ENCODE measurements at regions of chr1 and their contacts with region 1.

Region 1: DNA sequence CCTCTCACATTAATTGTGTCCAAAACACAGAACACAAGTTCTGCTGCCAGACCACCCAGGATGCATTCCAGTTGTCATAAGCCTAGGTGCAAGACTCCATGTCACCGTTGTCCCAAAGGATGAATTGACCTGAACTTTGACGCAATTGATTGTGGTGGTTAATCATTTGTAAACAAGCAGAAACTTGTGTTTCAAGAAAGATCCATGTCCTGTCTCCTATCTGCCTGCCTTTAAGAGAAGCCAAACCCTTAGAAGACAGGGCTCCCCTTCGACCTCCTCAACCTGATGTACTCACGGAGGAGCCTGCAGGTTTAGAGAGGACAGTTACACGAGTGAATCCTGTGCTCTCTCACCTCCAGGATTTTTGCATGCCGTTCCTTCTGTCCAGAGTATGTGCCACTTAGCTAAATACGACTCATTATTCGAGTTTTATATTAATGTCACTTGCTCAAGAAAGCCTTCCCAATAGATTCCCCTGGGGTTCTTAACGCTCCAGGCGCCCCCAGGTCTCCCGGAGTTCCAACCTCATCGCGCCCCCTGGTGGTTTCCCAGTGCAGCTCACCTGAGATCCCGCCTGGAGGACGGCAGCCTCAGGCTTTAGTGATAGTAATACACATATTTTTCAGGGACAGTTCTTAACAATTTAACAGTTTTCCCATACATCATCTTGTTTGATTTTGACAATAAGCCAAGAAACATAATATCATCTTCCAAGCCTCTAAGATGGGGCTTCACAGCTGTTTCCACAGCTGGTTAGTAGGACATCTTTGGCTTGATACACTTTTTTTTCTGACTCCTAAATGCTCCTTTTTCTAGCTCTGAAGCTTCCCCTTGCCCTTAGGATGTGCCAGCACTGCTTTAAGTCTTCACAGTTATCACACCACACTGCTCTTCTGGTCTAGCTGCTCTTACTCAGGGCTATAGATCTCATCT is 2.4 kb upstream of the C8B start:
- DNase-seq: peak; percentile 21 to 93
- H3K4me3 ChIP-seq: no peak overlapping the region
- H3K27ac ChIP-seq: no peak overlapping the region
- H3K4me1 ChIP-seq: no peaks in the 10 kb centered on the region
- H3K27me3 ChIP-seq: no peaks in the 10 kb centered on the region
- CTCF ChIP-seq: peak; percentile 74 to 87 (median 83)
- EP300 ChIP-seq: no peak
- POLR2A ChIP-seq: no peak
- RAD21 ChIP-seq: peak; percentile 75 to 85

Region 2: GRCh38 chr1:56814205-56814604 is 154.0 kb before region 1 on chr1:
- CTCF ChIA-PET with region 1: no interaction called
- POLR2A ChIA-PET with region 1: no interaction called
- DNase-seq: no peak
- H3K4me3 ChIP-seq: no peak overlapping the region
- H3K27ac ChIP-seq: no peak overlapping the region
- H3K4me1 ChIP-seq: peaks cover 0 to 5% (median 3%) of the 10 kb centered on the region in 4 experiments; a peak in 5 of 7 replicates
- H3K27me3 ChIP-seq: no peaks in the 10 kb centered on the region
- CTCF ChIP-seq: no peak
- EP300 ChIP-seq: no peak
- POLR2A ChIP-seq: no peak
- RAD21 ChIP-seq: no peak

Region 3: DNA sequence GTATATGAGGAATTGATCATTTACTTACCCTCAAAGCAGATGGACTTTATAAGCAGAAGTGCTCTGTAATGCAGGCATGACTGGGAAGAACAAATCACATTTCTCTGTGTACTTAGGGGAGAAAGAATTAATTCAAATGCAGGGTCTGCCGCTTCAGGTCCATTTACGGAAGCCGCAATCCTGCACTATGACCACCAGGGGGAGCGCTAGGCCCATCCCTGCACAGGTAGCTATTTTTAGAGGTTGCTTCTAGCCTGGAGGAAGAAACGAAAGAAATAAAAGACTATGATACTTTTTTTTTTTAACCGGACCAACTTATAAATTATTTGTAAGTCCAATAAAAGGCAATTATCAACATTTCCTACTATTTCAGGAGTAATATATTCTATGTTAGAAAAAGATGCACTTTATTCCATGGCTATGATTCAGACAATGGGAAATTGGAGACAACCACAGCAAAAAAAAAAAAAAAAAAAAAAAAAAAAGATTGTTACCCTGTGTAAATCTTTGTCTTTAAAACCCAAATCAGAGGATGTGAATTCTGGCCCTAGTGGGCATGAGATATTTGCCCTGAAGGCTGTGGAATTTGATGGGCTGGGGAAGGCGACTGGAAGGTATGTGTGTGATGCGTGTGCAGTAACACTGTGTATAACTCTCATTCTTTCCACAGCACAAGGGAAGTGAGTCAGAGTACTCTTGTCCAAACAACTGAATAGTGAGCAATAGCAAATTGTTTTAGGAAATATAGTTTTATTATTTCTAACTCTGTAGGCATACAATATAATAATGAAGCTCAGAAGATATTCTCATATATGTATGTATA is 136.1 kb before region 1 on chr1:
- CTCF ChIA-PET with region 1: interaction called, 193 read pairs
- POLR2A ChIA-PET with region 1: no interaction called
- DNase-seq: peak; percentile 46 to 81
- H3K4me3 ChIP-seq: no peak overlapping the region
- H3K27ac ChIP-seq: no peak overlapping the region
- H3K4me1 ChIP-seq: no peaks in the 10 kb centered on the region
- H3K27me3 ChIP-seq: peaks cover 0 to 2% (median 0%) of the 10 kb centered on the region in 4 experiments; a peak in 1 of 7 replicates
- CTCF ChIP-seq: peak; percentile 88 to 89 (median 89)
- EP300 ChIP-seq: no peak
- POLR2A ChIP-seq: no peak
- RAD21 ChIP-seq: peak; percentile 98

Region 4: GRCh38 chr1:56931686-56932085 is 36.5 kb before region 1 on chr1:
- CTCF ChIA-PET with region 1: interaction called, 13 read pairs
- POLR2A ChIA-PET with region 1: no interaction called
- DNase-seq: no peak
- H3K4me3 ChIP-seq: no peak overlapping the region
- H3K27ac ChIP-seq: no peak overlapping the region
- H3K4me1 ChIP-seq: peaks cover 0 to 5% (median 4%) of the 10 kb centered on the region in 4 experiments; a peak in 4 of 7 replicates
- H3K27me3 ChIP-seq: no peaks in the 10 kb centered on the region
- CTCF ChIP-seq: no peak
- EP300 ChIP-seq: no peak
- POLR2A ChIP-seq: no peak
- RAD21 ChIP-seq: no peak

Region 5: DNA sequence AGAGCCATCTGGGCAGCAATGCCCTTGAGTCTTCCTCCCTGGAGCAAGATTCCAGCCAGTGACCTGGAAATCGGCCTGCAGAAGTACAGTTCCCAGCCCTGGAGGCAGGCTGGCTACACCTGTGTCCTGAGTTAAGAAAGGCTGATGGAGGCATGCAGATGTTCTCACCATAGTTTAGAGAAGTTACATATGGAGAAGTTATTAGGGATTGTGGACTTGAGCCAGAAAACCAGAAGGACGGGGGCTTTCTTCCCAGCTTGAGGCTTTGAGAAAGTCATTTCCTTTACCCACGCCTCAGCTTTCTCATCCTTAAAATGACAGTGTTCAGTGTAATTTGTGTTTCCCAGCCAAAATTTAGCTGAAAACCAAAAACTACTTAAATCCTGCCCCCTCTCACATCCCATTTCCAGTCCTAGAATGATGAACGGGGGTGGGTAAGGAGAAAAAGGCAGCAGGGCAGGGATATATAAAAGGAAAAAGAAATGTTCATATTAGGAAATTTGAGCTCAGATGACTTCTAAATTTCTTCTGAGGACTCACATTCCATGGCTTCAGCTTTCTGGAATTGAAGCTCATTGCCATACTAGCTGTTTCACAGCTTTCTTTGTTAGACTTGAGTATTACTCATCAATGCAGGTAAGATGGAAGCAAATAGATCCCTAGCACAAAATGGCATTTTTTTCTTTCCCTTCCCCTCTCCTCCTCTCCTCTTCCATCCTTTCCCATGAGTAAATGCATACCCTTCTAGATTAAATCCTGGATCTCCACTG is 12.0 kb after region 1 on chr1:
- CTCF ChIA-PET with region 1: interaction called, 13 read pairs
- POLR2A ChIA-PET with region 1: no interaction called
- DNase-seq: no peak
- H3K4me3 ChIP-seq: no peak overlapping the region
- H3K27ac ChIP-seq: no peak overlapping the region
- H3K4me1 ChIP-seq: no peaks in the 10 kb centered on the region
- H3K27me3 ChIP-seq: no peaks in the 10 kb centered on the region
- CTCF ChIP-seq: no peak
- EP300 ChIP-seq: no peak
- POLR2A ChIP-seq: no peak
- RAD21 ChIP-seq: no peak

Region 6: DNA sequence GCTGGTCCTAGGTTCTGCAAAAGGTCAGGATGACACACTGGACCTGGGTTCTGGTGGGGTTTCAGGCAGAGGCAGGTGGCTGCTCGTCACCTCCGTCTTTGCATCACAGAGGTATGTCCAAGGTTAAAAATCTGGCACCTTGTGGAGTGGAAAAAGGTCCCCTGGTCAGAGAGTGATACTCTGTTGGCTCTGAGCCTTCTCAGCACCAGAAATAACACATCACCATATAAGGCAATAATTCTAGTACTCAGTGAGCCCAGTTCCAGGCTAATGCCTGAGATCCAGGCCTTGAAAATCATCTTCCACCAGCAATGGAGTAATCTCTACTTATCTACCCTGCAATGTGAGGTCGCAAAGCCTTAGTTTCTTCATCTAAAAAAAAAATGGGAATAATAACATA is 125.0 kb after region 1 on chr1:
- CTCF ChIA-PET with region 1: no interaction called
- POLR2A ChIA-PET with region 1: no interaction called
- DNase-seq: no peak
- H3K4me3 ChIP-seq: no peak overlapping the region
- H3K27ac ChIP-seq: no peak overlapping the region
- H3K4me1 ChIP-seq: peaks cover 0 to 2% (median 0%) of the 10 kb centered on the region in 4 experiments; a peak in 2 of 7 replicates
- H3K27me3 ChIP-seq: no peaks in the 10 kb centered on the region
- CTCF ChIP-seq: no peak
- EP300 ChIP-seq: no peak
- POLR2A ChIP-seq: no peak
- RAD21 ChIP-seq: no peak

Measured in H1 (cell line).